Ascending aorta (tissue), 2 donors: ENCODE measurements at regions of chr20 and their contacts with region 1.

Region 1: GRCh38 chr20:38057351-38057972 is 23.9 kb downstream of the RPRD1B start:
- DNase-seq: peak; percentile 16 to 93
- H3K4me3 ChIP-seq: no peak overlapping the region
- H3K27ac ChIP-seq: no peak overlapping the region
- H3K4me1 ChIP-seq: no peaks in the 10 kb centered on the region
- H3K27me3 ChIP-seq: no peaks in the 10 kb centered on the region
- CTCF ChIP-seq: peak; percentile 81 to 93 (median 84)

Region 2: GRCh38 chr20:38073307-38074071 is 16.0 kb after region 1 on chr20:
- intact Hi-C with region 1: loop called (anchors 1 kb)
- DNase-seq: peak in 1 of 2 donors; percentile 86
- H3K4me3 ChIP-seq: no peak overlapping the region
- H3K27ac ChIP-seq: peak overlapping the region; percentile 86
- H3K4me1 ChIP-seq: peaks cover 18 to 34% of the 10 kb centered on the region in 2 donors
- H3K27me3 ChIP-seq: no peaks in the 10 kb centered on the region
- CTCF ChIP-seq: peak; percentile 64 to 88 (median 80)

Region 3: GRCh38 chr20:38094373-38094891 is 37.0 kb after region 1 on chr20:
- intact Hi-C with region 1: no loop called
- DNase-seq: peak in 1 of 2 donors; percentile 84
- H3K4me3 ChIP-seq: no peak overlapping the region
- H3K27ac ChIP-seq: peak overlapping the region; percentile 15 to 58
- H3K4me1 ChIP-seq: peaks cover 8 to 17% of the 10 kb centered on the region in 2 donors
- H3K27me3 ChIP-seq: no peaks in the 10 kb centered on the region
- CTCF ChIP-seq: no peak

Region 4: DNA sequence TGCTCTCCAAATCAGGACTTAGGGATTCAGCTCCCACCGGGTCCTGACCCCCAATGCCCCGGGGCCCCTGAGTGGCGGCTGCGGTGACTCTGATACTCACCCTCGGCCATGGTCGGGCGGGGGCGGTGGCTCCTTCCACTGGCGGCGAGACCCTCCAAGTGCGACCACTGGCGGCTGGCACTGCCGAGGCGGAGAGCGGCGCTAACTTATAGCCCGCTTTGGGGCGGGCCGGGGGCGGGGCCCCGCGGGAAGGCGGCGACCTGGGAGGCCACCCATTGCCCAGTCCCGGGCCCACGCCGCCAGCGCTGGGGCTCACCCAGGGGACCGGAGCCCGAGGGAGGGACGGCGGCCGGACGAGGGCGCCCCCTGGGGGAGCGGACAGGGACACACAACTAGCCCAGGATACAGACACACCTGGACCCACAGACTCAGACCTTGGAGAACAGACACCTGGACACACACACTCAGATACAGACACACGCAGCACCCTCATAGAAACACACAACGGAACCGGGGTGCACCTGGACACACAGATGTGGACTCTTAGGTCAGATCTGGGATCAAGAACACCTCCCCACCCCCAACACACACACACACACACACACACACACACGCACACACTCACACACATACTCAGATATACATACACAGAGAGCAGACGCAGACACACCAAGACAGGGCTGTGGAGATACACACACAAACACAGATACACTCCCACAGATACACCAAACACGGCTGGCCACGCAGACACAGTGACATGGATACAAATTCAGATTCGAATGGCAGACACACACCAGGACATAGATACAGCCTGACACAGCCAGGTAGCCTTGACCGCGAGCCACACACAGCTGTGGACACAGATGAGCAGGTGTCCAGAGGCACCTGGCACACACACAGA is 107.9 kb after region 1 on chr20 and contains the start of gene TGM2:
- intact Hi-C with region 1: loop called (anchors 1 kb)
- DNase-seq: peak; percentile 42 to 91
- H3K4me3 ChIP-seq: peak within 1 kb of the TSS; percentile 62 to 75
- H3K27ac ChIP-seq: peak within 1 kb of the TSS; percentile 86 to 88
- H3K4me1 ChIP-seq: peaks cover 19 to 35% of the 10 kb centered on the region in 2 donors
- H3K27me3 ChIP-seq: no peaks in the 10 kb centered on the region
- CTCF ChIP-seq: peak; percentile 87 to 95 (median 92)
- total RNA-seq, gene TGM2: 529 TPM

Region 5: DNA sequence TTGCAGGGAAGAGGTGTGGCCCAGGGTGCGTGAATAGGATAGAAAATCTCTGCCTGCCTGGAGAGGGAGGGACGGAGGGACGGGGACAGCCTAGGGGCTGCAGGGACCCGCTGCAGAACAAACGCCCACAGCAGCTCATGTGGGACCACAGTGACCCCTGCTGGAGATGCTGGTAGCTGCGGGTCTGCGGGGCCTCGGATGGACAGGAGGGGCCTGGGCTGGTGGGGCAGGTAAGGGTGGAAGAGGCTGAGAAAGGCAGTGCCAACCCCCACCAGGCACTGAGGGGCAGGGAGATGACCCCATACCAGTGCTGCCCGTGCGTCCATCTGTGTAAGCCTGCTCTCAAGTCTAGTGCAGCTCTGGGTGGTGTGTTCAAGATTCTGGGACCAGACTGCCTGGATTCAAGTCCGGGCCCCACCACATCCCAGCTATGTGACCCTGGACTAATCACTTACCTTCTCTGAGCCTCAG is 163.7 kb after region 1 on chr20:
- intact Hi-C with region 1: loop called (anchors 1 kb)
- DNase-seq: peak in 1 of 2 donors; percentile 82
- H3K4me3 ChIP-seq: no peak overlapping the region
- H3K27ac ChIP-seq: no peak overlapping the region
- H3K4me1 ChIP-seq: peaks cover 0 to 8% of the 10 kb centered on the region in 2 donors
- H3K27me3 ChIP-seq: no peaks in the 10 kb centered on the region
- CTCF ChIP-seq: peak; percentile 86 to 94 (median 89)

Region 6: DNA sequence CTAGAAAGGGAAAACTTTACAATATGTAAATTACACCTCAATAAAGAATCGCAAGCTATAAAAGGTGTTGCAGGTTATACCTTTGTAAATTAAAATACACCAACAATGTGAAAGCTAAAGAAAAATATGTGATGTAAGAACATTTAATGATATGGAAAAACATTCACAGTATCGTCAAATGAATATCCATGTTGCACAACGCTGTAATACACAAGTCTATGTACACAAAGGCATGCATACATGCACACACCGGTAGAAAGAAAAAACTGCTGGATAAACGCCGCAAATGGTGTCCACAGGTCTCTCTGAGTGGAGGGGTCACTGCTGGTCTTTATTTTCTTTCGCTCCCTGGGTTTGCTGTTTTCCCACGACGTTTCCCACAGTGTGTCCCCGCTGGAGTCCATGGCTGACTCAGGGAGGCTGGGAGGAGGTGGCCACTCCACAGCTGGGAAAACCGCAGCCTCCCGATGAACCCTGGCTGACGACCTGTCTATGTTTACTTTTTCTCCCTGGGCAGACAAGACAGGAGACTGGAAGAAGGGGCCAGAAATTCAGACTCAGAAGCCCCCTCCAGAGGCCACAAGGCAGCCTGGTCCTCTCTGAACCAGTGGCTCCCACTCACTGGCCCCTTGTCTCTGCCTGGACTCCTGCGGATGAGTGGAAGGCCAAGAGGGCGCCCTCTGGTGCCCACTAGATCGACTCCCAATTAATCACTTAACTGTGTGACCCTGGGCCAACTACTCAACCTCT is 233.5 kb after region 1 on chr20:
- intact Hi-C with region 1: loop called (anchors 10 kb)
- DNase-seq: peak in 1 of 2 donors; percentile 64
- H3K4me3 ChIP-seq: no peak overlapping the region
- H3K27ac ChIP-seq: no peak overlapping the region
- H3K4me1 ChIP-seq: no peaks in the 10 kb centered on the region
- H3K27me3 ChIP-seq: no peaks in the 10 kb centered on the region
- CTCF ChIP-seq: peak; percentile 29 to 51 (median 44)

Region 7: DNA sequence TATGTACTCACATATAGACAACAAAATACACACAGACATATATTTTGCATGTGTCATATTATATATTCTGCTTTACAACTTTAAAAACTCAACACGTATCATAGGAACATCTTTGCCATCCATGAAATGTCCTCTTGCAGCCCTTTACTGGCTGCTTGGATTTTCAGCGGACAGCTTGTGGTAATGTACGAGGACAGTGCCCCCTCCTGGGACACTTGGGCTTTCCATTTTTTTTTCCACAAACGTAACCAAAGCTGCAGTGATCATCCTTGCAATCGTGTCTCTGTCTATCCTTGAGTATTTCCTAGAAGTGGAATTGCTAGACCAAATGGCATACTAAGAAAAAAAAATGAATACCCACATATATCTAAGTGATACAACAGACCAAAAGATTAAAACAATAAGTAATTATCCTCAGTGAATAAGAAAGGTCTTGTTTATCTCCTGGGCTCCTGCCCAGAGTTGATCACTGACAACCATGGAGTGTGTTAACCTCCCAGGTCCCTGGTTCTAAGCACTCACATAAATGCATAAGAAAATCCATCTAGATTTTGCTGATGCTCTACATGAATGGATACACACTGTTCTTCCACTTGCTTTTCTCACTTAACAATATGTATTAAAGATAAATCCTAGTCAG is 264.6 kb after region 1 on chr20:
- intact Hi-C with region 1: loop called (anchors 5 kb)
- DNase-seq: no peak
- H3K4me3 ChIP-seq: no peak overlapping the region
- H3K27ac ChIP-seq: no peak overlapping the region
- H3K4me1 ChIP-seq: no peaks in the 10 kb centered on the region
- H3K27me3 ChIP-seq: no peaks in the 10 kb centered on the region
- CTCF ChIP-seq: peak; percentile 55 to 67 (median 60)

Region 8: GRCh38 chr20:38406476-38406875 is 349.0 kb after region 1 on chr20:
- intact Hi-C with region 1: loop called (anchors 10 kb)
- DNase-seq: no peak
- H3K4me3 ChIP-seq: no peak overlapping the region
- H3K27ac ChIP-seq: no peak overlapping the region
- H3K4me1 ChIP-seq: no peaks in the 10 kb centered on the region
- H3K27me3 ChIP-seq: no peaks in the 10 kb centered on the region
- CTCF ChIP-seq: no peak